A549 (cell line): ENCODE measurements at regions of chr19 and their contacts with region 1.

Region 1: DNA sequence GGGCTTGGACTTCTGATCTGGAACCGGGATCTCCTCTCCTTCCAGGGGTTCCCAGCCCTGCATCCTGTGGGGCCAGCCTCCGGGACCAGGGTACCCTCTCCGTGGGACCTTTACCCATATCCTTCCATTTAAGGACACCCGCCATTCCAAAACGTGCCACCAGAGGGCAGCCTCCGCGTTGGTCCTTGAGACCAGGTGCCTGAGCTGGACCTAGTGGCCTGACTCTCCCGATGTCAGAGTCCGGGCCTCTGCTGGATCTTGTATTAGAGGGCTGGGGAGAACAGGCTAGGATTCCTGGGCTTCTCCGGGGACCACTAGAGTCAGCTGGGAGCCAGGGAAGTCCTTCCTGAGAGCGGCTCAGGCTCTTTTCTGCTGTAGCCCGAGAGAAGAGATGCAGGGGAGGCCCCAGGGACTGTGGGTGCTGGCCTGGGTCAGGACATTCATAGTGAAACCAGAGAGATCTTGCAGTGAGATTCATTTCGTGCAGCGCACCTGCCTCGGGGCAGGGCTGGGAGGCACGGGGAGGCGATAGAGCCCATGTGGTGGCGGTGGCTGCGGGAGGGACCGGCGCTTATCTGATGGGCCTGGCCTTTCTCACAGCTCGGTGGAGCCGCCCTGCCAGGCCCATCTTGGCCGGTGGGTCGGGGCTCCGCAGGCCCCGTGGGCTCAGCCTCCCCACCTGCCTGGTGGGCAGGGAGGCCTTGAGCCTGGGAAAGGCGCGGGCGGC is 9.8 kb upstream of the SLC7A10 start:
- DNase-seq: peak; percentile 88 to 98
- ATAC-seq: peak; percentile 66 to 90
- H3K4me3 ChIP-seq: no peak overlapping the region
- H3K27ac ChIP-seq: 0 out of 6 replicates have a peak overlapping the region, but pooled peaks of 1 of the 2 experiments have one; percentile 13
- H3K4me1 ChIP-seq: no peaks in the 10 kb centered on the region; the same call in 2 of the 3 replicates
- CTCF ChIP-seq: peak; percentile 99
- EP300 ChIP-seq: no peak
- POLR2A ChIP-seq: no peak
- RAD21 ChIP-seq: peak; percentile 94 to 95

Region 2: GRCh38 chr19:33186431-33187182 is 48.8 kb before region 1 on chr19:
- CTCF ChIA-PET with region 1: interaction called, 10 read pairs
- POLR2A ChIA-PET with region 1: no interaction called
- DNase-seq: no peak
- ATAC-seq: no peak
- H3K4me3 ChIP-seq: no peak overlapping the region
- H3K27ac ChIP-seq: no peak overlapping the region
- H3K4me1 ChIP-seq: no peaks in the 10 kb centered on the region
- CTCF ChIP-seq: no peak
- EP300 ChIP-seq: no peak
- POLR2A ChIP-seq: no peak
- RAD21 ChIP-seq: no peak

Region 3: GRCh38 chr19:33208904-33209849 is 26.3 kb before region 1 on chr19:
- CTCF ChIA-PET with region 1: interaction called, 39 read pairs
- POLR2A ChIA-PET with region 1: no interaction called
- DNase-seq: no peak
- ATAC-seq: no peak
- H3K4me3 ChIP-seq: no peak overlapping the region
- H3K27ac ChIP-seq: no peak overlapping the region
- H3K4me1 ChIP-seq: no peaks in the 10 kb centered on the region
- CTCF ChIP-seq: no peak
- EP300 ChIP-seq: no peak
- POLR2A ChIP-seq: no peak
- RAD21 ChIP-seq: no peak

Region 4: DNA sequence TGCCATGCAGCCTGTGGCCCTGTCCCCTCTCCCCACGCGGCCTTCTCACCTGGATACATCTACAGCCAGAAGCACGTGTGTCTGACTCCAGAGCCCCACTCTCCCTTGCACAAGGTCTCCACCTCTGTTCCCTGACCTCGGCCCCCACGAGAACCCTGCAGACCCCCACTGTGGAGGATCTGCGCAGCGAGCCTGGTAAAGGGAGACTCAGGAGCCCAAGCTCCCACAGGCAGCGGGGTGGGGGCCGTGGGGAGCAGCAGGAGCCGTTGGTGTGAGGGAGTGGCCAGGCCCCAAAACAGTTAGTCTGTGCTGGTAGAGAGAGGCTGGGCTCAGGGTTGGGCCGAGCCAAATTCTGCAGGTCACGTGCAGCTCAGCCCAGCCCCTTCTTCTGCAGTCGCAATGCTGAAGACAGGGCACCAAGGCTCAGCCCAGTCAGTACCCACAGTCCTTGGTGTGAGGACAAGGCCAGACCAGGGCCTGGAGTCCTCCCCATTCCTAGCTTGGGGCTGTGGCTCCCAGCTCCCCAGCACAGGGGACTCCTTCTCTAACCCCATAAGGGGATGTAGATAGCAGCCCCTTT is 18.9 kb after region 1 on chr19:
- CTCF ChIA-PET with region 1: interaction called, 105 read pairs
- POLR2A ChIA-PET with region 1: no interaction called
- DNase-seq: no peak
- ATAC-seq: peak; percentile 11 to 24; a peak in 3 of 6 replicates
- H3K4me3 ChIP-seq: no peak overlapping the region
- H3K27ac ChIP-seq: no peak overlapping the region
- H3K4me1 ChIP-seq: peaks cover 8% of the 10 kb centered on the region
- CTCF ChIP-seq: no peak
- EP300 ChIP-seq: no peak
- POLR2A ChIP-seq: no peak
- RAD21 ChIP-seq: no peak

Region 5: DNA sequence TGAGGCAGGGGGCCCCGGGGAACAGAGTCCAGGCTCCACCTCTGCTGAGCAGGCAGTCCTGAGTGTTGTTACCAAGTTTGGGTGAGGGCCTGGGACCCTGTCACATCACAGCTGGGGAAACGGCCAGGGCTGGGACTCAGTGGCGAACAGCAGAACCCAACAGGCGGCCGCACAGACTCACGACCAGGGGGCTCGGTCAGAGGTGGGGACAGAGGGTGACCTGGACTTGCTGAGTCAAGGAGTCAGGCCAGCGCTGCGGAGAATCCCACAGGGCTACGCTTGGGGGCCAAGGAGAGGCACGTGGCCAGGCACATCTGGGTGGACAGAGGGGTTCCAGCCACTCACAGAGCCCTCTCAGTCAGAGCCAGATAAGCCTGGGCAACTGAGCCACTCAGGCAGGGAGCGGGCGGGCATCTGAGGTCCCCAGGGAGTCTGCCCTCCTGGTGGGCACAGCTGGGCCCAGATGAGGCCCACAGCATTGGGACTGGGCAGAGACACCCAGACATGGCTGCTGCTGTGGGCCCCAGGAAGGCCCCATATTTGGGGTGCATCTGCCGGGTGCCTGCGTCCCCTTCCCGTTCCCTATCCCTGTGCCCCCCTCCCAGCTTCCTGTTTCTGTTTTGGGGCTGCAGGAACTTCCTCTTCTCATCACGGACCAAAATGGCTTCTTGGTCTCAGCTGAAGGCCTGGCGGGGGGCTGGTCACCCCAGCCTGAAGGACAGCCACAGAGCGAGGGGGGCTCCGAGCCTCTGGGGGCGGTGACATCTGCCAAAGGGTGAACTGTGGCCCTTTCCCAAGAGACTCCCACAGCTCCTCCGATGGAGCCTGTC is 32.9 kb after region 1 on chr19:
- CTCF ChIA-PET with region 1: interaction called, 35 read pairs
- POLR2A ChIA-PET with region 1: no interaction called
- DNase-seq: no peak
- ATAC-seq: peak in 1 of 2 experiments; percentile 4; a peak in 3 of 6 replicates
- H3K4me3 ChIP-seq: no peak overlapping the region
- H3K27ac ChIP-seq: no peak overlapping the region; a peak in 1 of 6 replicates
- H3K4me1 ChIP-seq: peaks cover under 1% of the 10 kb centered on the region; the same call in 1 of the 3 replicates
- CTCF ChIP-seq: no peak
- EP300 ChIP-seq: no peak
- POLR2A ChIP-seq: no peak
- RAD21 ChIP-seq: no peak

Region 6: DNA sequence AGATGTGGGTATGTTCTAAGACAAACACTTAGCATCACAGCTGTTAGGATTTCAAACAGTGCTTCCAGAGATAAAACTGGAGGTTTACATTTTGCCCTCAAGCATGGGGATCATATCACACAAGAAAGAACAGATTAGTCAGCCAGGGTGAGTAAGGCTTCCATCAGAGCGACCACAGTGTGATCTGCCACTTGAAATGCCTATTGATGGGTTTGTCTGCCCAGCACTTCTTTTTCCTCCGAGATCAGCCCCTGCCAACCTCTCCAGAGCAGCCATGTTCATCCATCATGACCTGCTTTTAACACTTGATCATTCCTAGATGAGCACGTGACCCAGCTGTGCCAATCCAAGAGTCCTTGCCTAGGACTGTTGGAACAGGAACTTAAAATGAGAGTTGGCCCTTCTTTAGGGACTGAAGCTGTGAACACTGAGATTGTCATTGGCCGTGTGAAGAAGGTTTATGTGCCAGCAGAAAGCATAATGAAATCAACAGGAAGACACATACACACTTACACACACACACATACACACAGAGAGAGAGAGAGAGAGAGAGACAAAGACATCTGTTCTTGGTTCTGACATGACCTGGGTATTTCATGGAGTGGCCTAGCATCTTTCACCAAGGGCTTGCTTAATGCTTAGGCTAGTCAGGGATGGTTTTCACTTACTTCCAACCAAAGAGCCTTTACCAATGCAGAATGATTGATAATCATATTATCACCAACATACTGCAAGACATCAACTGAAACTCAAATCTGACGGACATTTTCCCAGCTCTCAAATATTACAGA is 132.8 kb after region 1 on chr19:
- CTCF ChIA-PET with region 1: interaction called, 54 read pairs
- POLR2A ChIA-PET with region 1: interaction called, 4 read pairs
- DNase-seq: peak in 1 of 2 experiments; percentile 49
- ATAC-seq: peak in 1 of 2 experiments; percentile 16; a peak in 2 of 6 replicates
- H3K4me3 ChIP-seq: no peak overlapping the region
- H3K27ac ChIP-seq: 0 out of 6 replicates have a peak overlapping the region, but pooled peaks of 1 of the 2 experiments have one; percentile 1
- H3K4me1 ChIP-seq: peaks cover 12% of the 10 kb centered on the region; the same call in 2 of the 3 replicates
- CTCF ChIP-seq: no peak
- EP300 ChIP-seq: no peak
- POLR2A ChIP-seq: no peak
- RAD21 ChIP-seq: no peak

Region 7: GRCh38 chr19:33388725-33389420 is 153.4 kb after region 1 on chr19:
- CTCF ChIA-PET with region 1: interaction called, 1,493 read pairs
- POLR2A ChIA-PET with region 1: interaction called, 8 read pairs
- DNase-seq: no peak
- ATAC-seq: no peak
- H3K4me3 ChIP-seq: no peak overlapping the region
- H3K27ac ChIP-seq: no peak overlapping the region
- H3K4me1 ChIP-seq: peaks cover 20% of the 10 kb centered on the region; the same call in 2 of the 3 replicates
- CTCF ChIP-seq: no peak
- EP300 ChIP-seq: no peak
- POLR2A ChIP-seq: no peak
- RAD21 ChIP-seq: no peak

Region 8: DNA sequence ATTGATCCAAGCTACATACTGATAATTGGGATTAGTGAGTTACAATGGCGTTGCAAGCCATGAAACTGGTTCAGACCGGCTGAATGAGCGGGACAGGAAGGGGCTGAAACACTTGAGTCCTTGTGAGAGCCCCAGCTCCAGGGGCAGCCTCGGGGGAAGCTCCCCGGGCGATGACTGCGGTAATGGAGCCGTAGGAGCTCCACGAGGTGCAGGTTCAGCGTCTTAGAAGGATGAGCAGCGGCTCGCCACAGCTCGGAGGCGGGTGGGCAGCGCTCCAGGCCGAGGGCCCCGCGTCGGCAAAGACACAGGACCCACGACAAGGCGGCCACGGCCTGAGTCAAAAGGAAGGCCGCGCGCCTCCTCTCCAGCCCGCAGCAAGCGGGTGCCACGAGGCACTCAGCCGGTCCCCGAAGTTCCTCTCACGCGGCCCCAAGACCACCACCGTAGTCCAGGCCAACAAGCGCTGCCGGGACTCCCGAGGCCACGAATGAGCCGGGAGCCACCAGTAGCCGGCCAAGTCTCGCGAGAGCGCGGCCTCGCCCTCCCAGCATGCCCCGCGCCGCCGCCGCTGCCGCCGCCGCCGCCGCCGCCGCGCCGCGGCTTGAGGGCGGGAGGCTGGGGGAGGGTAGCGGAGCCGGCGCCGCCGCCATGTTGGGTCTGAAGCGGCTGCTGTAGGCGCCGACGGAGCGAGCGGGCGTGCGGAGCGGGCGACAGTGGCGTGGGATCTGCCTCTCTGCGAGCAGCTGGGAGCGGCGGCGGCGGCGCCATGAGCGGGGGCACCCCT is 936.6 kb after region 1 on chr19 and contains the start of gene LSM14A:
- CTCF ChIA-PET with region 1: no interaction called
- POLR2A ChIA-PET with region 1: no interaction called
- DNase-seq: peak; percentile 97 to 98
- ATAC-seq: peak; percentile 86 to 87
- H3K4me3 ChIP-seq: peak within 1 kb of the TSS; percentile 67
- H3K27ac ChIP-seq: peak within 1 kb of the TSS; percentile 94 to 95
- H3K4me1 ChIP-seq: peaks cover 38% of the 10 kb centered on the region
- CTCF ChIP-seq: no peak
- EP300 ChIP-seq: no peak
- POLR2A ChIP-seq: peak; percentile 98
- RAD21 ChIP-seq: no peak
- polyA plus RNA-seq, gene LSM14A: 264 and 278 TPM in 2 replicates